Heart left ventricle (tissue), 16 donors: ENCODE measurements at regions of chr1 and their contacts with region 1.

Region 1: GRCh38 chr1:15323351-15323988 is 76.4 kb downstream of the FHAD1 start:
- DNase-seq: peak; percentile 65 to 78 (median 77)
- ATAC-seq: peak; percentile 79 to 90 (median 86)
- H3K4me3 ChIP-seq: peak overlapping the region in 1 of 12 donors; percentile 2
- H3K27ac ChIP-seq: peak overlapping the region in 6 of 12 donors; percentile 13 to 57 (median 36)
- H3K4me1 ChIP-seq: peaks cover 0 to 20% (median 8%) of the 10 kb centered on the region in 12 donors
- H3K27me3 ChIP-seq: no peaks in the 10 kb centered on the region
- CTCF ChIP-seq: peak; percentile 95 to 99 (median 98)
- POLR2A ChIP-seq: no peak

Region 2: GRCh38 chr1:15028102-15028501 is 295.4 kb before region 1 on chr1:
- intact Hi-C with region 1: no loop called
- DNase-seq: peak in 4 of 5 donors; percentile 27 to 70 (median 57)
- ATAC-seq: peak; percentile 48 to 83 (median 71)
- H3K4me3 ChIP-seq: no peak overlapping the region
- H3K27ac ChIP-seq: no peak overlapping the region
- H3K4me1 ChIP-seq: peaks cover 0 to 4% (median 0%) of the 10 kb centered on the region in 12 donors
- H3K27me3 ChIP-seq: peaks cover 0 to 3% (median 0%) of the 10 kb centered on the region in 9 donors
- CTCF ChIP-seq: no peak
- POLR2A ChIP-seq: no peak

Region 3: DNA sequence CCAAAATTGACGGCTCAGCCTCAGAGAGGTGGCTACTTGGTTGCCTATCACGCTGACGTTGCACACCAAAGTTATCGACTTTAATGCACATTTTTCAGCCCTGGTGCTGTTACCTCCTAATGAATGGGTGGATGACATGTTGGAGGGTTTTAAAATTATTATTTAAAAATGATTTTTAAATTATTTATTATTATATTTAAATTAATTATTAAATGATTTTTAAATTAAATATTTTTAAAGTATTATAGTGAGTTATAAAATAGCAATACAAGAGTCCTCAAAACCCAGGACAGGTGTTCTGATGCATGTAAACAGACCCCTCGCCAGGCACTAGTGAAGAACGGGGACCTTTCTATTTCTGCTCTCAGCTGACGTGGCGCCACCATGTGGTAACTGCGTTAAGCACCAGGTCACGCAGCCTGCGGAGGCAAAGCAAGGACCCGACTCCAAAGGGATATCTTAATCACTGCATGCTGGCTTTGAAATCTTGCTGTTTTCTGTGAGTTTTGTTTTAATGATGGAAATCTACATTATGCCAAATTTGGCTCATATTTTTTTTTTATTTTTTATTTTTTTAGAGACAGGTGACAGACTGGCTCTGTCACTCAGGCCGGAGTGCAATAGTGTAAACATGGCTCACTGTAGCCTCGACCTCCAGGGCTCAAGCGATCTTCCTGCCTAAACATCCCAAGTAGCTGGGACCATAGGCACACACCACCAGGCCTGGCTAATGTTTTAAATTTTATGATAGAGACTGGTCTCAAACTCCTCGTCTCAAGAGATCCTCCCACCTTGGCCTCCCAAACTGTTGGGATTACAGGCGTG is 177.9 kb after region 1 on chr1:
- intact Hi-C with region 1: loop called in 8 of 10 experiments (anchors 5 to 10 kb)
- DNase-seq: peak; percentile 45 to 79 (median 56)
- ATAC-seq: peak in 3 of 4 donors; percentile 34 to 74 (median 56)
- H3K4me3 ChIP-seq: no peak overlapping the region
- H3K27ac ChIP-seq: no peak overlapping the region
- H3K4me1 ChIP-seq: no peaks in the 10 kb centered on the region
- H3K27me3 ChIP-seq: no peaks in the 10 kb centered on the region
- CTCF ChIP-seq: peak; percentile 44 to 75 (median 61)
- POLR2A ChIP-seq: no peak

Region 4: GRCh38 chr1:15526490-15527339 is 203.2 kb after region 1 on chr1 and contains the start of gene DNAJC16:
- intact Hi-C with region 1: loop called in 2 of 10 experiments (anchors 5 to 10 kb)
- DNase-seq: peak; percentile 98 to 100 (median 100)
- ATAC-seq: peak; percentile 68 to 77 (median 73)
- H3K4me3 ChIP-seq: peak within 1 kb of the TSS; percentile 64 to 100 (median 76)
- H3K27ac ChIP-seq: peak within 1 kb of the TSS; percentile 68 to 99 (median 96)
- H3K4me1 ChIP-seq: peaks cover 8 to 43% (median 29%) of the 10 kb centered on the region in 12 donors
- H3K27me3 ChIP-seq: no peaks in the 10 kb centered on the region
- CTCF ChIP-seq: peak in 6 of 12 donors; percentile 6 to 45 (median 30)
- POLR2A ChIP-seq: peak in 1 of 2 donors; percentile 74
- total RNA-seq, gene DNAJC16: 11.9 to 22.8 (median 19.1) TPM

Region 5: DNA sequence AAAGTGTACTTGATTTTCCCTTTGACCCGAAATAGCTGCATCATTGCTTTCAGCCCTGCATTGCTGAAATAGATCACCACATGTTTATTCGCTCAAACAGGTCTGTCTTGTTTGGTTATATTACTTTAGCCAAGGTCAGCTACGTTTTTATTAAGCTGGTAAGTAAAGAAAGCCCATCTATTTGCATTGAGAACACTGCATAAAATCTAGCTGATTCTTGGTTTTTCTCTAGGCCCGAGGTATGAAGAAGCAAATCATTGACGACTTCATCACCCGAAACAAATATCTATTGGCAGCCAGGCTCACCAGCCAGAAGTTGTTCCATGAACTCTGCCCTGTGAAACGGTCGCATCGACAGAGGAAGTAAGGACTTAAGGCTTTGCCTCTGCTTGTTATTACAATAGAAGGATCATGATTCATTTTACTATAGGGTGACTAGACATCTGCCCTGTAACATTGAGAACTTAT is 235.9 kb after region 1 on chr1:
- intact Hi-C with region 1: no loop called
- DNase-seq: no peak
- ATAC-seq: no peak
- H3K4me3 ChIP-seq: no peak overlapping the region
- H3K27ac ChIP-seq: no peak overlapping the region
- H3K4me1 ChIP-seq: no peaks in the 10 kb centered on the region
- H3K27me3 ChIP-seq: no peaks in the 10 kb centered on the region
- CTCF ChIP-seq: no peak
- POLR2A ChIP-seq: no peak